ENCODE measurements at regions of chr2 and their contacts with region 1.

Region 1: GRCh38 chr2:106104332-106105062 is 89.6 kb downstream of the UXS1 start:
- DNase-seq: peak; percentile 49 to 87 (median 62)
- H3K4me3 ChIP-seq: no peak overlapping the region
- H3K27ac ChIP-seq: no peak overlapping the region
- H3K4me1 ChIP-seq: no peaks in the 10 kb centered on the region
- H3K27me3 ChIP-seq: no peaks in the 10 kb centered on the region
- CTCF ChIP-seq: peak; percentile 87 to 97 (median 93)
- POLR2A ChIP-seq: no peak

Region 2: DNA sequence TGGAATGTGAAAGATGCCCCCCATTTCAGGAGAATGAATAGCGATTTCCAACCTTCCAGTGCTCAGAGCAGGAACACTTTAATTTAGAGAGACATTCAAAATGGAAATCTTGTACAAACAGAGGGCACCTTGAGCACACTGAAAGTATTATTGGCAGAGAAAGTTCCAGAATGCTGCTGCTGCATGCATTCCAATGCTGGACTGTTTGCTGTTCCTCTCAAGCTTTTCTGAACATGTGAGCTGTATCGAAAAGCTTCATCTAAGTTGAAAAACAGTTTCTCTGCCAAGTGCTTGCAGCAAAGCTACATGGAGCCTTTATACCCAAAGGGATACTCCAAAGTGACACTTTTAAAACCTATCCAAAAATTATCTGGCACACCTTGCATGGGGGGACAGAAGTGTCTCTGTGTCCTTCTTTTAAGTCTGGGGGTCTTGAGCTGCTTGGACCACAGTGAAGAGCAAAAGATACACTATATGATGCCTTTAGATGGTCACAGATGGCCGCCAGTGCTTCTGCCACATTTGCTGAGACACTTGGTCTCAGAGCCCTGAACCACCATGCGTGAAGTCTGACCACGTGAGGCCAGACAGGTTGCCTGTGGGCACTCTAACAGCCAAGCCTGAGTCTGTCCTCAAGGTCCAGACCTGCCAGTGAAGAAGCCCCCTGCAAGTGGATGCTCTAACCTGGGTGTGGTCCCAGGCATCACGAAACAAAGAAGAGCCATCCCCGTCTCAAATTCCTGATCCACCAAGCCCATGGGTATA is 70.8 kb after region 1 on chr2:
- intact Hi-C with region 1: no loop called
- DNase-seq: no peak
- H3K4me3 ChIP-seq: no peak overlapping the region
- H3K27ac ChIP-seq: no peak overlapping the region
- H3K4me1 ChIP-seq: no peaks in the 10 kb centered on the region
- H3K27me3 ChIP-seq: no peaks in the 10 kb centered on the region
- CTCF ChIP-seq: no peak
- POLR2A ChIP-seq: no peak

Region 3: DNA sequence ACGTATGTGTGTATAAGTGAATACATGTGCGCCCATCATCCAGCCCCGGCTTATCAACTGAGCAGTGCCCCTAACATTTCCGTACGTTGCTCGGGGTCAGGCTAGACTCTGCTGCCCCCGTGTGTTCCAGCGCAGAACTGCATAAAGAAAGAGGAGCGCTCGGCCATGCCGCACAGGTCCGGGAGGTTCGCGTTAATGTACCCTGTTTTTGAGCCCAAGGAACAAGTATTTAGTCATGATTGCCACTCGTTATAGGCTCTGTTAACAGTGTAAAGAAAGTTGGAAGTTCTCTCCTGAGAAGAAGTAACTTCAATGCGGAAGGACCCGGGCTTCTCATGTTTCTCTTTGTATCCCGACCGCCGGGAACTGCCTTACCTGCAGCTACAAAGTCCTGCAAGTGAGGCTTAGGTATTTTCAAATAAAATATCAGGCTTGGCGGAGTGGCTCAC is 438.3 kb after region 1 on chr2:
- intact Hi-C with region 1: loop called in 1 of 2 experiments (anchors 5 kb)
- DNase-seq: peak; percentile 46 to 85 (median 65)
- H3K4me3 ChIP-seq: peak overlapping the region in 1 of 4 donors; percentile 25
- H3K27ac ChIP-seq: no peak overlapping the region
- H3K4me1 ChIP-seq: peaks cover 0 to 6% of the 10 kb centered on the region in 2 donors
- H3K27me3 ChIP-seq: no peaks in the 10 kb centered on the region
- CTCF ChIP-seq: peak; percentile 58 to 93 (median 82)
- POLR2A ChIP-seq: no peak

Region 4: GRCh38 chr2:106582148-106583143 is 477.9 kb after region 1 on chr2:
- intact Hi-C with region 1: loop called (anchors 10 kb)
- DNase-seq: peak; percentile 75 to 92 (median 82)
- H3K4me3 ChIP-seq: peak overlapping the region in 1 of 4 donors; percentile 48
- H3K27ac ChIP-seq: peak overlapping the region in 1 of 5 donors; percentile 41
- H3K4me1 ChIP-seq: peaks cover 0 to 13% of the 10 kb centered on the region in 2 donors
- H3K27me3 ChIP-seq: peaks cover 13% of the 10 kb centered on the region
- CTCF ChIP-seq: peak; percentile 71 to 86 (median 76)
- POLR2A ChIP-seq: no peak